ENCODE measurements at regions of chr3 and their contacts with region 1.

Region 1: GRCh38 chr3:118628704-118629341 is 405.8 kb downstream of the IGSF11 start:
- DNase-seq: peak; percentile 43
- ATAC-seq: peak; percentile 95
- H3K4me3 ChIP-seq: no peak overlapping the region
- H3K27ac ChIP-seq: no peak overlapping the region
- H3K4me1 ChIP-seq: no peaks in the 10 kb centered on the region
- H3K27me3 ChIP-seq: no peaks in the 10 kb centered on the region
- CTCF ChIP-seq: peak; percentile 85 to 94 (median 86)
- EP300 ChIP-seq: no peak
- POLR2A ChIP-seq: no peak
- RAD21 ChIP-seq: peak; percentile 89

Region 2: DNA sequence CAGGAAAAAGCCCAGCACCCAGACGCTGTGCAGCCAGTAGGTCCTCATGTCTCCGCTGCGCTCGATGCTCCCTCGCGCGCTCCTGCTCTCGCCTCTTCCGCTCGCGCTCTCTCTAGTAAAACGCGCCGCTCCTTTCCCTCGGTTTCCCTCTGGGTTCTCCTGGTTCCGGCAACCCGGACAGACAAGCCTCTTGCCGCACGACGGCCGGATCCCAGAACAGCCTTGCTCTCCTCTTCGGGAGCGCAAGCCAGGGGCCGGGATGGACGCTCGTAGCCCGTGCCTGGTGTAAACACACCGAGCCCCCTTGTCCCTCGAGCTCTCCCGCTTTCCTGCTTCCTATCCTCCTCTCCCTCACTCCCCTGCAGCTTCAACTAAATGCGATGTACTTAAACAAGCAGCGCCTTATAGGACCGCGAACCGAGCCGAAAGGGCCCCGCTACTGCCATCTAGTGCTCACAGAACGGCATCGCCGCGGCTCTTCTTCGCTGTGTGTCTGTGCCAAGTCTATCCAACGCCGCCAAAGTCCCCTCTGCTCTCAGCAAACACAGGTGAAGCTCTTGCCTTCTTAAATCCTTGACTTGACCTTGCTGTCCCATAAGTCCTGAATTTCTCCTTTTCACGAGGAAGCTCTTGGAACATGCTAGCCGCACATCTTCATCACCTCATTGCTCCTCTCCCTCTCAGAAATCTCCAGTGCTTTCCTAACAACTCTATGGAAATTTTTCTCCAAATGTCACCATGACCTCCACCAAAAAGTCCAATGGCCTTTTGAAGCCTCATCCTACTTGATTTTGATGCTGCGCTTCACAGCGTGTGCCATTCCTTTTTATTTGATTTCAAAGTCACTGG is 631.4 kb before region 1 on chr3:
- CTCF ChIA-PET with region 1: interaction called, 5 read pairs
- POLR2A ChIA-PET with region 1: no interaction called
- RAD21 ChIA-PET with region 1: interaction called, 3 read pairs
- SMC1A ChIA-PET with region 1: no interaction called
- in situ Hi-C with region 1: no loop called
- intact Hi-C with region 1: loop called (anchors 2 kb)
- DNase-seq: peak; percentile 3
- ATAC-seq: peak; percentile 100
- H3K4me3 ChIP-seq: no peak overlapping the region
- H3K27ac ChIP-seq: no peak overlapping the region
- H3K4me1 ChIP-seq: no peaks in the 10 kb centered on the region
- H3K27me3 ChIP-seq: no peaks in the 10 kb centered on the region; a peak in 1 of 4 replicates
- CTCF ChIP-seq: peak; percentile 78 to 93 (median 90)
- EP300 ChIP-seq: no peak
- POLR2A ChIP-seq: no peak
- RAD21 ChIP-seq: peak; percentile 50

Region 3: GRCh38 chr3:118102737-118103136 is 526.1 kb before region 1 on chr3:
- CTCF ChIA-PET with region 1: no interaction called
- POLR2A ChIA-PET with region 1: no interaction called
- RAD21 ChIA-PET with region 1: no interaction called
- SMC1A ChIA-PET with region 1: no interaction called
- in situ Hi-C with region 1: no loop called
- intact Hi-C with region 1: loop called (anchors 10 kb)
- DNase-seq: no peak
- ATAC-seq: no peak
- H3K4me3 ChIP-seq: no peak overlapping the region
- H3K27ac ChIP-seq: no peak overlapping the region
- H3K4me1 ChIP-seq: no peaks in the 10 kb centered on the region
- H3K27me3 ChIP-seq: no peaks in the 10 kb centered on the region
- CTCF ChIP-seq: no peak
- EP300 ChIP-seq: no peak
- POLR2A ChIP-seq: no peak
- RAD21 ChIP-seq: no peak

Region 4: GRCh38 chr3:118269537-118270125 is 359.2 kb before region 1 on chr3:
- CTCF ChIA-PET with region 1: no interaction called
- POLR2A ChIA-PET with region 1: no interaction called
- RAD21 ChIA-PET with region 1: no interaction called
- SMC1A ChIA-PET with region 1: no interaction called
- in situ Hi-C with region 1: no loop called
- intact Hi-C with region 1: loop called (anchors 10 kb)
- DNase-seq: no peak
- ATAC-seq: no peak
- H3K4me3 ChIP-seq: no peak overlapping the region
- H3K27ac ChIP-seq: no peak overlapping the region
- H3K4me1 ChIP-seq: no peaks in the 10 kb centered on the region
- H3K27me3 ChIP-seq: no peaks in the 10 kb centered on the region
- CTCF ChIP-seq: no peak
- EP300 ChIP-seq: no peak
- POLR2A ChIP-seq: no peak
- RAD21 ChIP-seq: no peak

Region 5: GRCh38 chr3:118478706-118479276 is 150.0 kb before region 1 on chr3:
- CTCF ChIA-PET with region 1: interaction called, 4 read pairs
- POLR2A ChIA-PET with region 1: no interaction called
- RAD21 ChIA-PET with region 1: interaction called, 3 read pairs
- SMC1A ChIA-PET with region 1: interaction called, 6 read pairs
- in situ Hi-C with region 1: no loop called
- intact Hi-C with region 1: loop called (anchors 5 kb)
- DNase-seq: no peak
- ATAC-seq: peak; percentile 10
- H3K4me3 ChIP-seq: no peak overlapping the region
- H3K27ac ChIP-seq: no peak overlapping the region; the same call in 1 of the 2 replicates
- H3K4me1 ChIP-seq: peaks cover 7% of the 10 kb centered on the region
- H3K27me3 ChIP-seq: no peaks in the 10 kb centered on the region
- CTCF ChIP-seq: no peak
- EP300 ChIP-seq: no peak
- POLR2A ChIP-seq: no peak
- RAD21 ChIP-seq: no peak